ENCODE measurements at regions of chr7 and their contacts with region 1.

Region 1: GRCh38 chr7:129091484-129092002 is 36.6 kb upstream of the TNPO3 start:
- DNase-seq: peak; percentile 62
- ATAC-seq: peak; percentile 87
- H3K4me3 ChIP-seq: no peak overlapping the region
- H3K27ac ChIP-seq: peak overlapping the region; percentile 48
- H3K4me1 ChIP-seq: peaks cover 40% of the 10 kb centered on the region
- H3K27me3 ChIP-seq: no peaks in the 10 kb centered on the region
- CTCF ChIP-seq: peak; percentile 98 to 99 (median 98); a peak in 5 of 6 replicates
- EP300 ChIP-seq: no peak
- POLR2A ChIP-seq: no peak
- RAD21 ChIP-seq: peak; percentile 99

Region 2: GRCh38 chr7:128266883-128267607 is 824.5 kb before region 1 on chr7:
- CTCF ChIA-PET with region 1: no interaction called
- POLR2A ChIA-PET with region 1: no interaction called
- RAD21 ChIA-PET with region 1: no interaction called
- SMC1A ChIA-PET with region 1: no interaction called
- in situ Hi-C with region 1: no loop called
- intact Hi-C with region 1: no loop called
- DNase-seq: no peak
- ATAC-seq: no peak
- H3K4me3 ChIP-seq: no peak overlapping the region
- H3K27ac ChIP-seq: no peak overlapping the region
- H3K4me1 ChIP-seq: no peaks in the 10 kb centered on the region
- H3K27me3 ChIP-seq: peaks cover 0 to 2% of the 10 kb centered on the region in 2 experiments; a peak in 2 of 4 replicates
- CTCF ChIP-seq: no peak
- EP300 ChIP-seq: no peak
- POLR2A ChIP-seq: no peak
- RAD21 ChIP-seq: no peak

Region 3: GRCh38 chr7:128791121-128791961 is 300.2 kb before region 1 on chr7:
- CTCF ChIA-PET with region 1: no interaction called
- POLR2A ChIA-PET with region 1: no interaction called
- RAD21 ChIA-PET with region 1: no interaction called
- SMC1A ChIA-PET with region 1: no interaction called
- in situ Hi-C with region 1: no loop called
- intact Hi-C with region 1: loop called (anchors 5 kb)
- DNase-seq: no peak
- ATAC-seq: peak; percentile 93
- H3K4me3 ChIP-seq: peak overlapping the region; percentile 87
- H3K27ac ChIP-seq: no peak overlapping the region
- H3K4me1 ChIP-seq: peaks cover 3% of the 10 kb centered on the region; the same call in 1 of the 2 replicates
- H3K27me3 ChIP-seq: peaks cover 2% of the 10 kb centered on the region in 2 experiments; a peak in 2 of 4 replicates
- CTCF ChIP-seq: no peak
- EP300 ChIP-seq: no peak
- POLR2A ChIP-seq: peak; percentile 49; the same call in 1 of the 2 replicates
- RAD21 ChIP-seq: no peak

Region 4: DNA sequence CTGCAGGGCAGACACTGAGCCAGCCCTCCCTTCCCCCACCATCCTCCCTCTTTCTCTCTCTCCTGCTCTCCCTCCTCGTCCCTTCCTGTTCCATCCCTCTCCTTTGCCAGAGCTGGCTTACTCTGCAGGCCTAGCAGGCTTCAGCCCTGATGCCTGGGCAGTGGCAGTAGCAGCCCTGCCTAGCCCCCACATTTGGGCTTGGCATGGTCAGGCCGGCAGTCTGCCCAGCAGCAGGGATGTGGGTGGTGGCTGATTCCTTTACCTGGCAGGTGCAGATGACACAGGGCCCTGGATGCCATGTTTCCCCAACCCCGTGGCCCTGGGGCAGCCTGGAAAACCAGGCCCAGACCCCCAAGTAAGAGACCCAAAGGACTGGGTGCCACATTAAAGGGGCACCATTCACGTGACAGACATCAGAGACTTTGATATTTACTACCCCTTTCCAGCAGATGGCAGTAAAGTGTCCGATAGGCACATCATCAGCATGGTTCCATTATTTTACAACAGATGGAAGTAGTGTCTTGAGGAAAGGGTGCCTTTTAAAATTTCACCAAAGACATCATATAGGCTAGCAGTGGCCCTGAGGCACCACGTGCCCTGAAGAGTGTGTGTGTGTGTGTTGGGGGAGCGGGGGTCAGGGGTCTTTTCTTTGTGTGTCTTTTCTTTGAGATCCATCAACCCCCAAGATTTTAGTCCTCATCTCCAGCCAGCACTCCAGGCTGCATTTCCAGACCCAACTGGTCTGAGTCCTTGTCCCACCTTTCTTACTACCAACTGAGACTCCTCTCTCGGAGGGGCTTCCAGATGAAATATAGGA is 187.0 kb before region 1 on chr7:
- CTCF ChIA-PET with region 1: interaction called, 44 read pairs
- POLR2A ChIA-PET with region 1: interaction called, 3 read pairs
- RAD21 ChIA-PET with region 1: interaction called, 12 read pairs
- SMC1A ChIA-PET with region 1: interaction called, 20 read pairs
- in situ Hi-C with region 1: loop called (anchors 5 kb)
- intact Hi-C with region 1: loop called (anchors 1 kb)
- DNase-seq: peak; percentile 35
- ATAC-seq: peak; percentile 94
- H3K4me3 ChIP-seq: no peak overlapping the region
- H3K27ac ChIP-seq: no peak overlapping the region
- H3K4me1 ChIP-seq: peaks cover 7% of the 10 kb centered on the region
- H3K27me3 ChIP-seq: no peaks in the 10 kb centered on the region
- CTCF ChIP-seq: peak; percentile 59 to 78 (median 71)
- EP300 ChIP-seq: no peak
- POLR2A ChIP-seq: no peak
- RAD21 ChIP-seq: peak; percentile 92

Region 5: GRCh38 chr7:128954830-128955802 is 136.4 kb before region 1 on chr7:
- CTCF ChIA-PET with region 1: interaction called, 18 read pairs
- POLR2A ChIA-PET with region 1: no interaction called
- RAD21 ChIA-PET with region 1: interaction called, 11 read pairs
- SMC1A ChIA-PET with region 1: interaction called, 11 read pairs
- in situ Hi-C with region 1: no loop called
- intact Hi-C with region 1: loop called (anchors 5 kb)
- DNase-seq: no peak
- ATAC-seq: peak; percentile 87
- H3K4me3 ChIP-seq: peak overlapping the region; percentile 46; the same call in 1 of the 2 replicates
- H3K27ac ChIP-seq: peak overlapping the region; percentile 65
- H3K4me1 ChIP-seq: peaks cover 18% of the 10 kb centered on the region
- H3K27me3 ChIP-seq: no peaks in the 10 kb centered on the region
- CTCF ChIP-seq: no peak
- EP300 ChIP-seq: peak; percentile 74 to 79; a peak in 2 of 4 replicates
- POLR2A ChIP-seq: no peak
- RAD21 ChIP-seq: no peak

Region 6: DNA sequence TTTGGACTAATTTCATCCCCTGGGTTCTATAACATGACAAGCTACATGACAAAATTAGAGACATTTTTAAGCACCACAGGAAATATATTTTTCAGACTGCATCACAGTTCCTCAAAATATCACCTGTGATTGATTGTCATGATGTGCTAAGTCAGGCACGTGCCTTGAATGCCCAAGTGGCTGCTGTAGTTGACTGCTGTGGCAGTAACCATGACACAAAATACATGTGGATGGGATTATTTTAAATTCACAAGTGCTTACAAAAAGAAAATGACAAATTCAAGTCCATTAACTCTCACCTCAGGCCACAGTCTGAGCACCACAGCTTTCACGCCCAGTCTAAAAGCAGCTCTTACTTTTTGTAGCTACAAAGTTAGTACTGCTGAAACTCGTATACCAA is 82.1 kb before region 1 on chr7:
- CTCF ChIA-PET with region 1: interaction called, 47 read pairs
- POLR2A ChIA-PET with region 1: interaction called, 3 read pairs
- RAD21 ChIA-PET with region 1: interaction called, 22 read pairs
- SMC1A ChIA-PET with region 1: interaction called, 60 read pairs
- in situ Hi-C with region 1: no loop called
- intact Hi-C with region 1: loop called (anchors 5 kb)
- DNase-seq: peak; percentile 70
- ATAC-seq: peak; percentile 90
- H3K4me3 ChIP-seq: no peak overlapping the region
- H3K27ac ChIP-seq: peak overlapping the region; percentile 93
- H3K4me1 ChIP-seq: peaks cover 70% of the 10 kb centered on the region
- H3K27me3 ChIP-seq: no peaks in the 10 kb centered on the region
- CTCF ChIP-seq: no peak
- EP300 ChIP-seq: peak; percentile 66 to 90
- POLR2A ChIP-seq: no peak
- RAD21 ChIP-seq: no peak

Region 7: GRCh38 chr7:129066290-129067131 is 25.0 kb before region 1 on chr7:
- CTCF ChIA-PET with region 1: interaction called, 51 read pairs
- POLR2A ChIA-PET with region 1: interaction called, 5 read pairs
- RAD21 ChIA-PET with region 1: interaction called, 60 read pairs
- SMC1A ChIA-PET with region 1: interaction called, 46 read pairs
- in situ Hi-C with region 1: no loop called
- intact Hi-C with region 1: no loop called
- DNase-seq: no peak
- ATAC-seq: peak; percentile 35
- H3K4me3 ChIP-seq: no peak overlapping the region
- H3K27ac ChIP-seq: no peak overlapping the region
- H3K4me1 ChIP-seq: no peaks in the 10 kb centered on the region
- H3K27me3 ChIP-seq: no peaks in the 10 kb centered on the region
- CTCF ChIP-seq: no peak
- EP300 ChIP-seq: no peak
- POLR2A ChIP-seq: no peak
- RAD21 ChIP-seq: no peak

Region 8: DNA sequence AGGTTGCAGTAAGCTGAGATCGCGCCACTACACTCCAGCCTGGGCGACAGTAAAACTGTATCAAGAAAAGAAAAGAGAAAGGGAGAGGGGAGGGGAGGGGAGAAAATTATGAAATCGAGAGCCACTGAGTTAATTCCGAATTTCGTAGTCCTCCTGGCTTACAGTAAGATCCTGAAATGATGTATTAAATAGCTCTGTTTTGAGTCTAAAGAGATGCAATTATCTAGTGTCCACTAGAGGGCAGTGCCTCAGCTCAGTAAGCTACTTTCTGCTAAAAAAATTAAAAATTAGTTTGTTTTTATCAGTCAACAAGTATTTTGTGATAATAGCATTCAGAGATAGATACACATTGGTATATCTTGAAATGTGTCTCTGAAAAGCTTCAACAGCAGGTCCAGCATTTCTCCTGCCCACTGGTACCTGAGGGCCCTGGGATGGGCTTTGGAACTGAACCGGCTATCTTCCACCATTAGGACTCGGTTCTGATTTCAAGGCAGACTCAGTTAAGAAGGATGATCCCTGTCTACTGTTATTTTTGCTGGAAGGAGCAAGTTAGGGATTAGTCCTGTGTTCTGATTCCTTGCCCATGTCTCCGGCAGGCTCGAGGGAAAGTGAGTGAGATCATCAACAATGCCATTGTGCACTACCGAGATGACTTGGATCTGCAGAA is 72.5 kb after region 1 on chr7:
- CTCF ChIA-PET with region 1: interaction called, 28 read pairs
- POLR2A ChIA-PET with region 1: no interaction called
- RAD21 ChIA-PET with region 1: interaction called, 13 read pairs
- SMC1A ChIA-PET with region 1: interaction called, 20 read pairs
- in situ Hi-C with region 1: no loop called
- intact Hi-C with region 1: loop called (anchors 1 kb)
- DNase-seq: no peak
- ATAC-seq: peak; percentile 40
- H3K4me3 ChIP-seq: no peak overlapping the region
- H3K27ac ChIP-seq: no peak overlapping the region
- H3K4me1 ChIP-seq: peaks cover 57% of the 10 kb centered on the region
- H3K27me3 ChIP-seq: no peaks in the 10 kb centered on the region
- CTCF ChIP-seq: peak; percentile 61 to 78 (median 64)
- EP300 ChIP-seq: no peak
- POLR2A ChIP-seq: no peak
- RAD21 ChIP-seq: peak; percentile 60; the same call in 1 of the 2 replicates